ENCODE measurements at regions of chr17 and their contacts with region 1.

Region 1: GRCh38 chr17:50841949-50842354 is 6.6 kb downstream of the WFIKKN2 start:
- DNase-seq: peak; percentile 88
- CTCF ChIP-seq: peak; percentile 78

Region 2: DNA sequence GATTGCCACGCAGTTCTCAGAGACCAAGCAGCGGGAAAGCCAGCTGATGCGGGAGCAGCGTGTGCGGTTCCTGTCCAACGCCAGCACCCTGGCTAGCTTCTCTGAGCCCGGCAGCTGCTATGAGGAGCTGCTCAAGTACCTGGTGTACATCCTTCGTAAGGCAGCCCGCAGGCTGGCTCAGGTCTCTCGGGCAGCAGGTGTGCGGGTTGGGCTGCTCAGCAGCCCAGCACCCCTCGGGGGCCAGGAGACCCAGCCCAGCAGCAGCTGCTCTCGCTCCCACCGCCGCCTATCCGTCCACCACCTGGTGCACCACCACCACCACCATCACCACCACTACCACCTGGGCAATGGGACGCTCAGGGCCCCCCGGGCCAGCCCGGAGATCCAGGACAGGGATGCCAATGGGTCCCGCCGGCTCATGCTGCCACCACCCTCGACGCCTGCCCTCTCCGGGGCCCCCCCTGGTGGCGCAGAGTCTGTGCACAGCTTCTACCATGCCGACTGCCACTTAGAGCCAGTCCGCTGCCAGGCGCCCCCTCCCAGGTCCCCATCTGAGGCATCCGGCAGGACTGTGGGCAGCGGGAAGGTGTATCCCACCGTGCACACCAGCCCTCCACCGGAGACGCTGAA is 266.3 kb before region 1 on chr17:
- in situ Hi-C with region 1: no loop called
- DNase-seq: no peak
- CTCF ChIP-seq: no peak

Region 3: GRCh38 chr17:50661795-50662391 is 180.1 kb before region 1 on chr17:
- in situ Hi-C with region 1: no loop called
- DNase-seq: no peak
- CTCF ChIP-seq: no peak

Region 4: GRCh38 chr17:50785946-50786570 is 55.9 kb before region 1 on chr17:
- in situ Hi-C with region 1: loop called (anchors 5 kb)
- DNase-seq: no peak
- CTCF ChIP-seq: no peak

Region 5: DNA sequence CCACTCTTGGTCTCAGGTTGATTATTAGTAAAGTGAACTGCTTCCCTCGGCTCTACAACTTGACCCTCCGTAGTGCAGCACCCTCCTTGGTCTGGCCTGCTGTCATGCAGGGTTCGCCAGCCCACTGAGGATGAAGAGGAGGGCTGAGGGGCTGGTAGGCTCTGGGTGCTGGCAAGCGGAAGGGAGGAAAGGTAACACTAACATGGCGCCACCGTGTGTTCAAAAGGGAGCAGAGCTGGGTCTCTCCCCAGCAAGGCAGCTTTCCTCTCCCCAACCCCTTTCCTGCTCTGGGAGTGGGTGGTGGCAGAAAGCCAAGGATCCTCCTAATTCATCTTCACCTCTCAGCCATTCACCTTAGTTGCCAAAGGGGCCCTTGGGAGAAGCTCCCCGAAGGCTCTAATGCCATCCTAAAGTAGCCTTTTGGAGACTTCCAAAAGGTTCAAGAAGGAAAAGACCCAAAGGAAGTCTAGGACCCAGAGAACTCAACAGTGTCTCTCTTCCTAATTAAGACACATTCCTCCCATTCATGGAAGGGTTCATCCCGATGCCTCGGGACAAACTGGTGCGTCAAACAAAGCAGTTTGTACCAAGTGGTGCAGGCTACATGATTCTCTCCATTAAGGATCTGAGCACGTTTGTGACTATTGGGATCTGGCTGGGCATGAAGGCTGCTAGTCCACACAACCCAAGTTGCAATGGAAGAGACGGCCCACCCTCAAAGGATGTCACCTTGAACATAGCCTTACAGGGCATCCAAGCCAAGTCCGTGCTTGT is 115.0 kb after region 1 on chr17:
- in situ Hi-C with region 1: loop called (anchors 5 kb)
- DNase-seq: peak; percentile 76
- CTCF ChIP-seq: peak; percentile 84

Region 6: DNA sequence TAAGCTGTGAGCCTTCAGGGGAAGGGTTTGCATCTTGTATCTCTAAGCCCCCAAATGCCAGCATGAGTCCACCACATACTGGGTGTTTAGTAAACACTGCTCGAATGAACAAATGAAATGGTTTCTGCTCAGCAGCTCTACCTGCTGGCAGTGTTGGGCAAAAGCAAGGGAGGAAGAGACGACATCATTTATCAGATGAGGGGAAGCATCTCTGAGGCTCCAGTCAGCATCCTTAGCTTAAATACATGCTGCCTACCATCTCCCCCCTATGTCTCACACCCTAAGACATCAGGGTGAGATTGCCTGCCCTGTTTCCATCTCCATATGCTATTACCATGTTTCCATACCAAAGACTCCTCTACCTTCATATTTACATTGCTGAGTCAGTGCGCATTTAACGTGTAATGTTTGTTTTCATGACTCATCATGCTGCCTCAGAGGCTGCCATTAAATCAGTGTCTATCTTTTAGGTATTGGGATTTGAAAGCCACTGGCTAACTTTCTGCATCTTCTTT is 798.2 kb after region 1 on chr17:
- in situ Hi-C with region 1: no loop called
- DNase-seq: peak; percentile 21
- CTCF ChIP-seq: peak; percentile 25